ENCODE measurements at regions of chr7 and their contacts with region 1.

Region 1: DNA sequence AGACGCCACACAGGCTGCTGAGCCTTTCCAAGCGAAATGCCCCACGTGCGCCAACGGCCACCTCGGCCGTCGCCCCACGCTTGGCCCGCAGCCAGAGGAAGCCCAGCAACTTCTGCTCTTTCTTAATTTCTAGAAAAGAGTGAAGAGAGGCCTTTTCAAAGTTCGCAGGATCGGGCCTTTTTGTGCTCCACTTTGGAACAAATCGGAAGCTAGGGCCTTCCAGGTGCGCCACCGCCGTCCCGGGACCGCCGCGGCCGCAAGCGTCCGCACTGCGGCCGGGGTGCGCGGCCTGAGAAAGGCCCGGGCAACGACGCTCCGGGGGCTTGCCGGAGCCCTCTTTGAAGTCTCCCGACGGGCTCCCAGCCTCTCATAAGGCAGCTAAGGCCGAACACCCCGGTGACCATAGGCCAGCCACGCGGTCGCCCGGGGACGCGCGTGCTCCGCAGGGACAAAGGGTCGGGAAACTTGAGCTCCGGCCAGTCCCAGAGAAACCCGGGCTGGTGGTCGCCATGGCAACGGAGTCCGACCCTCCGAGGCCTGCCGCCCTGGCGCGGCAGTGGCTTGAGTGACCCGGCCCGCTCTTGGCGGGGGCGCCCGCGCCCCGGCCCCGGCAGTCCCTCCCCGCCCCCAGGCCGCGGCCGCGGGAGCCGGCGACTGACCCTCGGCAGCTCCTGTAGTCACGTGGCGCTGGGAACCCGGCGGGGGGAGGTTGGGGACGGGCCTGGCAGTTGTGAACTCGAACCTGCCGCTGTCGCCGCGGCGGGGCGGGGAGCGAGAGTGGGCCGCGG is at the start of gene REPIN1:
- DNase-seq: peak; percentile 94
- H3K4me3 Mint-ChIP-seq: peak within 1 kb of the TSS; percentile 98
- H3K27ac Mint-ChIP-seq: peak within 1 kb of the TSS; percentile 97
- H3K4me1 Mint-ChIP-seq: peaks cover 40% of the 10 kb centered on the region
- H3K27me3 Mint-ChIP-seq: no peaks in the 10 kb centered on the region
- total RNA-seq, gene REPIN1: 73.6 and 79.7 TPM in 2 replicates

Region 2: GRCh38 chr7:149873074-149873969 is 495.0 kb before region 1 on chr7 and contains the start of gene ATP6V0E2:
- intact Hi-C with region 1: loop called (anchors 5 kb)
- DNase-seq: peak; percentile 98
- H3K4me3 Mint-ChIP-seq: peak within 1 kb of the TSS; percentile 90
- H3K27ac Mint-ChIP-seq: peak within 1 kb of the TSS; percentile 92
- H3K4me1 Mint-ChIP-seq: peaks cover 71% of the 10 kb centered on the region
- H3K27me3 Mint-ChIP-seq: no peaks in the 10 kb centered on the region
- total RNA-seq, gene ATP6V0E2: 43.5 and 46.7 TPM in 2 replicates

Region 3: GRCh38 chr7:150356265-150356897 is 11.9 kb before region 1 on chr7:
- intact Hi-C with region 1: loop called (anchors 1 kb)
- DNase-seq: peak; percentile 79
- H3K4me3 Mint-ChIP-seq: no peak overlapping the region
- H3K27ac Mint-ChIP-seq: peak overlapping the region; percentile 41
- H3K4me1 Mint-ChIP-seq: peaks cover 39% of the 10 kb centered on the region
- H3K27me3 Mint-ChIP-seq: peaks cover 3% of the 10 kb centered on the region

Region 4: DNA sequence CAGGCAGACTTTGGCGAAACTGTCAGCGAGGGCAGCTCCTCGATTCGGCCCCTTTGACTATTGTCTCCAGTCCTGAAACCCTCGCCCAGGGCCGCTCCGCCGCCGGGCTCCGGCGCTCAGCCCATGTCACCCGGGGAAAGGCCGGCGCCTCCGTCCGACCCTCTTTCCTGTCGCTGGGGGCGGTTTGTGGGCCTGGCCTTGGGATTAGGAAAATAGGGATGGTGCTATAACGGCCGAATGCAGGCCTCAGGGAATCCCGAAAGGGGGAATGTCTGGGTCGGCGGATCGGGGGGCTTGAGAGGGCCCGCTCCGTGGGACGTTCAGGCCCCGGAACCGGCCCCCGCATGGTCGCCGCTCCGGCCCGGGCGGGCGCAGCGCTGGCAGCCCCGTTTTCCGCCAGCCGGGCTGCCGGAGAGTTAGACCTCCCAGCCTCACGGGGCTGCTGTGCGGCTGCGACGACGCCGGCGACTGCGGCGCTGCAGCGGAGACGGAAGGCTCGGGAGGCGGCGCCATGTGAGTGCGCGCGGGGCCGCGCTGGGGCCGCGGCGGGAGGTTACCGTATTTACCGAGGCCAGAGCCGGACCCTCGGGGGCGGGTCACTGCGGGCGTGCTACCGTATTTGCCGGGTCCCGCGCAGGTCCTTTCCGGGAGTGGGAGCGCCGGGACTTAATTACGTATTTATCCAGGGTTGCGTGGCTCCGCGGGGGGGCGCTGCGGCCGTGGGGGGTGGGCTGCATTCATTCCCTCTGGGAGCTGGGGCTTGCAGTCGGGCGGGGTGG is 36.7 kb after region 1 on chr7:
- intact Hi-C with region 1: loop called (anchors 1 kb)
- DNase-seq: peak; percentile 95
- H3K4me3 Mint-ChIP-seq: peak overlapping the region; percentile 87
- H3K27ac Mint-ChIP-seq: peak overlapping the region; percentile 89
- H3K4me1 Mint-ChIP-seq: peaks cover 34% of the 10 kb centered on the region
- H3K27me3 Mint-ChIP-seq: no peaks in the 10 kb centered on the region

Measured in activated CD4-positive, alpha-beta T cell treated with anti-CD3 and anti-CD28 coated beads, Interleukin-2, amount 10 ng/mL, durations not matched to agents 24 days and 14 days (primary cell).